IMR-90 (cell line): ENCODE measurements at regions of chr6 and their contacts with region 1.

Region 1: DNA sequence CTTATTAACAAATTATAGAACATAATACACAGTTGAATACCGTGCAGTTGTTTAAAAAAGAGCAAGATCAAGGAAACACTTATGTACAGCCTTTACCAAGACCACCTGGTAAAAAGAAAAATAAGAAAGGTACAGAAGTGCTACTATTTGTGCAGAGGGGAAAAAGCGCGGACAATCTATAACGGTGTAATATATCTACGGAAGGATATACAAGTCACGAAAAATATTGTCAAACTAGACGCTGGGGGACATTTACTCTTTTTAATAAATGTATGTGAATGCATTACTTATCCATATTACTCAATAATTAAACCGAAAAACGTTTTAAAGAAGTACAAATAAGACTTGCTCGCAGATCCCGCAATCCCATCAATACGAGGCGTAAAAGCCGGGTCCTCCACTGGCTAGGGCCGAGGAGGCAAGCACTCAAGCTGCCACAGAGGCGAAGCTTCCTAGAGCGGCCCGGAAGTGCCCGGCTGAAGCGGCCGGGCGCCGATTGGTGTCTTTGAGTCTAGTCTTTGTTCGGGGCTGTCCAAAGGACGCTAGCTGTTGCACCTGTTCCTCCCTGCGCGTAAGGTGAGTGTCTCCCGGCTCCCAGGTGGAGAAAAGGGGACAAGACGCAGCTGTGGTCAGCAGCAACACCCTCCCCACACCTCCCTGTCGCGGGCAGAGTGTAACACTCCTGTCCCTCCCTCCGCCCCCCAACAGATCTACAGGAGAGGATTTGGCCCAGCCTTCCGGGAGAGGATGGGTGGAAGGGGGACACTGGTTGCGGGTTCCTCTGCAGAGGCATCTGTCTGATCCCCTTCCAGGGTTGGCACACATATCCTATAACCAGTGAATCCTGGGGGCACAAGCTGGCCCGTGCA is at the start of gene ZSCAN16:
- DNase-seq: peak; percentile 79
- ATAC-seq: peak; percentile 100
- H3K4me3 ChIP-seq: peak within 1 kb of the TSS; percentile 88
- H3K27ac ChIP-seq: peak within 1 kb of the TSS; percentile 47; the same call in 1 of the 2 replicates
- H3K4me1 ChIP-seq: peaks cover 2% of the 10 kb centered on the region; the same call in 1 of the 2 replicates
- H3K27me3 ChIP-seq: no peaks in the 10 kb centered on the region
- CTCF ChIP-seq: no peak
- POLR2A ChIP-seq: no peak
- RAD21 ChIP-seq: no peak
- total RNA-seq, gene ZSCAN16: 2.5 and 3.0 TPM in 2 replicates

Region 2: GRCh38 chr6:28383235-28384142 is 259.2 kb after region 1 on chr6:
- CTCF ChIA-PET with region 1: no interaction called
- POLR2A ChIA-PET with region 1: no interaction called
- dilution Hi-C with region 1: no loop called
- in situ Hi-C with region 1: no loop called
- intact Hi-C with region 1: loop called (anchors 1 kb)
- DNase-seq: peak; percentile 93
- ATAC-seq: peak; percentile 98
- H3K4me3 ChIP-seq: peak overlapping the region; percentile 48
- H3K27ac ChIP-seq: peak overlapping the region; percentile 49
- H3K4me1 ChIP-seq: no peaks in the 10 kb centered on the region
- H3K27me3 ChIP-seq: no peaks in the 10 kb centered on the region
- CTCF ChIP-seq: peak; percentile 51
- POLR2A ChIP-seq: peak; percentile 77
- RAD21 ChIP-seq: peak; percentile 46

Region 3: DNA sequence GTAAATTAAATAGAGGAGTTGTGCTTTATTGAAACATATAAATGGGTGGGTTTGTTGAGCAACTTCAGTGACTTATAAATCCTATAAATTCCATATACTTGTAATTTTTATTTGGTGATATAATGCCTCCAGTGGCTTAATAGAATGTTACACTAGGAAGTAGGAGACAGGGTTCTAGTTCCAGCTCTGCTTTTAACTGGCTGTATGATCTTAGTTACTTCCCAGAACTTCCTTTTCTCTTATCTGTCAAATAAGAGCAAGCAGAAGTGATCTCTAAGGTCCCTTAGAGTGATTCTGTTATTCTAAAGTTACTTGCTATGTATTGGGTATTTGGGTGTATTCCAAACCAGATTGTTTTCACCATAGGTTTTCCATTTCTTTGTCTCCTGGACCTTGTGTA is 308.8 kb after region 1 on chr6:
- CTCF ChIA-PET with region 1: no interaction called
- POLR2A ChIA-PET with region 1: no interaction called
- dilution Hi-C with region 1: no loop called
- in situ Hi-C with region 1: no loop called
- intact Hi-C with region 1: no loop called
- DNase-seq: no peak
- ATAC-seq: no peak
- H3K4me3 ChIP-seq: no peak overlapping the region
- H3K27ac ChIP-seq: no peak overlapping the region
- H3K4me1 ChIP-seq: no peaks in the 10 kb centered on the region
- H3K27me3 ChIP-seq: no peaks in the 10 kb centered on the region
- CTCF ChIP-seq: no peak
- POLR2A ChIP-seq: no peak
- RAD21 ChIP-seq: no peak